ENCODE measurements at regions of chrX and their contacts with region 1.

Region 1: GRCh38 chrX:72069350-72070160 is 62.2 kb downstream of the RTL5 start:
- DNase-seq: no peak
- H3K4me3 ChIP-seq: 0 out of 8 replicates have a peak overlapping the region, but pooled peaks of 1 of the 4 experiments have one; percentile 19
- H3K27ac ChIP-seq: no peak overlapping the region
- H3K4me1 ChIP-seq: peaks cover 0 to 11% (median 4%) of the 10 kb centered on the region in 4 experiments; a peak in 4 of 7 replicates
- H3K27me3 ChIP-seq: no peaks in the 10 kb centered on the region
- CTCF ChIP-seq: no peak
- EP300 ChIP-seq: no peak
- POLR2A ChIP-seq: no peak
- RAD21 ChIP-seq: no peak

Region 2: GRCh38 chrX:71996826-71997225 is 72.7 kb before region 1 on chrX:
- CTCF ChIA-PET with region 1: no interaction called
- POLR2A ChIA-PET with region 1: no interaction called
- DNase-seq: peak; percentile 44 to 52
- H3K4me3 ChIP-seq: no peak overlapping the region
- H3K27ac ChIP-seq: no peak overlapping the region
- H3K4me1 ChIP-seq: peaks cover 4 to 15% (median 13%) of the 10 kb centered on the region in 4 experiments; a peak in 6 of 7 replicates
- H3K27me3 ChIP-seq: no peaks in the 10 kb centered on the region
- CTCF ChIP-seq: no peak
- EP300 ChIP-seq: no peak
- POLR2A ChIP-seq: no peak
- RAD21 ChIP-seq: peak in 1 of 2 experiments; percentile 0; a peak in 1 of 4 replicates

Region 3: DNA sequence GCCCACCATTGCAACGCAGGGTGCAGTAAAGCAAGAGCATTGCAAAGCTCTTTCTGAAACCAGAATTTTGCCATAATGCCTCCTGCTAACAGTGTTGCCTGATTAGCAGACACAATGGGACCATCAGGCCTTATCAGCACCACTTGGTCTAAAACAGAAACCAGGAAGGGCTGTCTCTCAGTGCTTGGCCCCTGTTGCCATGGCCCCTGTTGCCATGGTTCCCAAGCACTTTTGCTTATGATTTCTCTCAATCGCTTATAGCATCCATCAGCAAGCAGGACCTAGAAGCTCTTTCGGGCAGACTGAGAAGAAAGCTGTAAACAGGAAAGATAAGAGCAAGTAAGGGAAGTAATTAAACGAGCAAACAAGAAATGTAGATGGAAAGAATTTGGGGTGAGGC is 25.3 kb after region 1 on chrX:
- CTCF ChIA-PET with region 1: no interaction called
- POLR2A ChIA-PET with region 1: no interaction called
- DNase-seq: no peak
- H3K4me3 ChIP-seq: no peak overlapping the region
- H3K27ac ChIP-seq: no peak overlapping the region
- H3K4me1 ChIP-seq: peaks cover 0 to 4% (median 1%) of the 10 kb centered on the region in 4 experiments; a peak in 2 of 7 replicates
- H3K27me3 ChIP-seq: no peaks in the 10 kb centered on the region
- CTCF ChIP-seq: no peak
- EP300 ChIP-seq: no peak
- POLR2A ChIP-seq: no peak
- RAD21 ChIP-seq: no peak

Region 4: GRCh38 chrX:72126539-72127140 is 57.1 kb after region 1 on chrX:
- CTCF ChIA-PET with region 1: interaction called, 16 read pairs
- POLR2A ChIA-PET with region 1: interaction called, 4 read pairs
- DNase-seq: peak; percentile 57 to 90
- H3K4me3 ChIP-seq: no peak overlapping the region
- H3K27ac ChIP-seq: no peak overlapping the region
- H3K4me1 ChIP-seq: peaks cover 6 to 16% (median 11%) of the 10 kb centered on the region in 4 experiments
- H3K27me3 ChIP-seq: peaks cover 12 to 29% (median 24%) of the 10 kb centered on the region in 4 experiments
- CTCF ChIP-seq: peak in 2 of 3 experiments; percentile 72 to 79; a peak in 3 of 4 replicates
- EP300 ChIP-seq: no peak
- POLR2A ChIP-seq: no peak
- RAD21 ChIP-seq: peak; percentile 84 to 86

Region 5: DNA sequence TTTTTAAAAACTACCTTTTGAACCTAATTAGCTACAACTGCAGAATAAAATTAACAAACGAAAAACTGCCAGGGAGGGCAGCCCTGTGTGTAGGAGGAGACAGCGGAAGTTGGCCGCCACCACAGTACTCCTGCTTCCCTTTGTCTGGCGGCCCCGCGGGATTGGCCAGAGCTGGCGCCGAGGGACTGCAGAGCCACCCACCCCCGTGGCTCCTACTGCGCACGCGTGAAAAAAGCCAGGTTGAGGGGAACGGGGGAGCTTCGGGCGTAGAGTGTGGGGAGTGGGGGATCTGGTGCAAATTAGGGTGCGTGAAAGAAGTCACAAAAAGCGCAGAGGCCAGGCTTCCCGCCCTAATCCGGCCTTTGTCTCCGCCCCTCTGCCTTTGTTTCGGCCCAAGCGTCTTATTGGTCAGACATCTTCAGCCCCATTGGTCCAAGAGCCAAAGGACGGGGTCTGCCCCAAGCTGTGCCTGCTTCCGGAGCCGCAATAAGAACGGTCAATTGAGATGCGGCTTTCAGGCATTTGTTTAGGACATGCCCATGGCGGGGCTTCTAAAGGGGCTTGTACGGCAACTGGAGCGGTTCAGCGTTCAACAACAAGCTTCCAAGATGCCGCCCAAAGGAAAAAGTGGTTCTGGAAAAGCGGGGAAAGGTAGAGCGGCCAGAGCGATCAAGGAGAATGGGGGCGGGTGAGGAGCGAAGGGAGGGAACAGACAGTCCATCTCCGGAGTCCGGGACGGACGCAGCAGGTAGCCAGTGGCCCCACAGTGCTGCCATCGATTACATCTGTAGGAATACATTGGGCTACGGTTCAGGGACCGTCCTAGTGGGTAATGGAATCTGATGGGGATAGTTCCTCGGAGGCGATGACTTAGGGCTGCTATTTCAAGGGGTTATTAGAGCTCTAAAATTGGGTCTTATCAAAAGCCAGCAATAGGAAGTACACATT is 111.9 kb after region 1 on chrX and contains the start of gene PIN4:
- CTCF ChIA-PET with region 1: no interaction called
- POLR2A ChIA-PET with region 1: no interaction called
- DNase-seq: peak; percentile 78 to 91
- H3K4me3 ChIP-seq: peak within 1 kb of the TSS; percentile 69 to 95 (median 74)
- H3K27ac ChIP-seq: peak within 1 kb of the TSS; percentile 92
- H3K4me1 ChIP-seq: peaks cover 0 to 5% (median 0%) of the 10 kb centered on the region in 4 experiments; a peak in 1 of 7 replicates
- H3K27me3 ChIP-seq: no peaks in the 10 kb centered on the region
- CTCF ChIP-seq: no peak
- EP300 ChIP-seq: no peak
- POLR2A ChIP-seq: peak; percentile 41 to 86; a peak in 2 of 3 replicates
- RAD21 ChIP-seq: no peak
- total RNA-seq, gene PIN4: 9.4 and 11.7 TPM in 2 replicates

Measured in H1 (cell line).